Esophagus muscularis mucosa (tissue), 4 donors: ENCODE measurements at regions of chrX and their contacts with region 1.

Region 1: DNA sequence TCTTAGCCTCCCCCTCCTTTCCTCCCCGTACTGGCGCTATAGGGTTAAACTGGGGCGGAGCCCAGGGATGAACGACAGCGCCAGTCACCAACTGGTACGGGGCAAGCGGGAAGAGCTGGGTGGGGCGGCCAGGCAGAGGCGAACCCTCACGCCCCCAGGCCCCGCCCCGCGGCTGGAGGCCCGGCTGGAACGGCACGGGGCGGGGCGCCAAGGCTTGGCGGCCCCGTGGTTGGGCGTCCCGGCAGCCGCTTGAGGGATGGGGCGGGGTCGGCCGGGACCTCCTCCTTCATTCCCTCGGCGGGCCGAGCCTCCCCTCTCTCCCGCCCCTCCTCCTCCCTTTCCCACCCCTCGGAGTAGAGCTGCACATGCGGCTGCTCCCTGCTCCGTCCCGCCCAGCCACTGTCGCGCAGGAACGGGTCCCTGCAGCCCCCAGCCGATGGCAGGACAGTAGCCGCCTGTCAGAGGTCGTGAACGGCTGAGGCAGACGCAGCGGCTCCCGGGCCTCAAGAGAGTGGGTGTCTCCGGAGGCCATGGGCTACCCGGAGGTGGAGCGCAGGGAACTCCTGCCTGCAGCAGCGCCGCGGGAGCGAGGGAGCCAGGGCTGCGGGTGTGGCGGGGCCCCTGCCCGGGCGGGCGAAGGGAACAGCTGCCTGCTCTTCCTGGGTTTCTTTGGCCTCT is at the start of gene EDA:
- DNase-seq: peak; percentile 92
- H3K4me3 ChIP-seq: peak within 1 kb of the TSS; percentile 63 to 73 (median 68)
- H3K27ac ChIP-seq: peak within 1 kb of the TSS; percentile 58 to 75 (median 66)
- H3K4me1 ChIP-seq: peaks cover 0 to 13% (median 6%) of the 10 kb centered on the region in 4 donors
- H3K27me3 ChIP-seq: no peaks in the 10 kb centered on the region
- CTCF ChIP-seq: no peak
- EP300 ChIP-seq: no peak
- POLR2A ChIP-seq: no peak
- total RNA-seq, gene EDA: 4.3 to 10.9 (median 6.3) TPM

Region 2: DNA sequence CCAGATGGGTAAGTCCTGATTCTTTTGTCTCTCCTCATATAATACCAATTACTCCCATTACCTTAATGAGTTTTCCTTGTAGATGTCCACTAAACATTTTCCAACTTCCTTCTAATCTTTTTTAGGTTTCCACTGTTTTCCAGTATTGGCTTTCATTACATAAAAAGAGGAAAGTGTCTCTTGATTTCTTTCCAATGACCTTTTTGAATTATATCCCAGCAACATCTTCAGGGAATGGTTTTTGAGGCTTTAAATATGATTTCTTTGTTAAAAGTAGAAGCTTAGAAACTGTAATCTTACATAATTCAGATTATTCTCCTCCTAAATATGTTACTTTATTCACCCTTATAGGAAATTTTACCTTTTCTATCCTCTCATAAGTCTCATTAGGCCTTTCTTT is 298.9 kb after region 1 on chrX:
- intact Hi-C with region 1: no loop called
- DNase-seq: no peak
- H3K4me3 ChIP-seq: no peak overlapping the region
- H3K27ac ChIP-seq: no peak overlapping the region
- H3K4me1 ChIP-seq: no peaks in the 10 kb centered on the region
- H3K27me3 ChIP-seq: no peaks in the 10 kb centered on the region
- CTCF ChIP-seq: no peak
- EP300 ChIP-seq: no peak
- POLR2A ChIP-seq: no peak

Region 3: GRCh38 chrX:70025464-70025863 is 409.5 kb after region 1 on chrX:
- intact Hi-C with region 1: loop called (anchors 5 kb)
- DNase-seq: no peak
- H3K4me3 ChIP-seq: no peak overlapping the region
- H3K27ac ChIP-seq: no peak overlapping the region
- H3K4me1 ChIP-seq: peaks cover 0 to 25% (median 17%) of the 10 kb centered on the region in 4 donors
- H3K27me3 ChIP-seq: no peaks in the 10 kb centered on the region
- CTCF ChIP-seq: no peak
- EP300 ChIP-seq: no peak
- POLR2A ChIP-seq: no peak